ENCODE measurements at regions of chr1 and their contacts with region 1.

Region 1: DNA sequence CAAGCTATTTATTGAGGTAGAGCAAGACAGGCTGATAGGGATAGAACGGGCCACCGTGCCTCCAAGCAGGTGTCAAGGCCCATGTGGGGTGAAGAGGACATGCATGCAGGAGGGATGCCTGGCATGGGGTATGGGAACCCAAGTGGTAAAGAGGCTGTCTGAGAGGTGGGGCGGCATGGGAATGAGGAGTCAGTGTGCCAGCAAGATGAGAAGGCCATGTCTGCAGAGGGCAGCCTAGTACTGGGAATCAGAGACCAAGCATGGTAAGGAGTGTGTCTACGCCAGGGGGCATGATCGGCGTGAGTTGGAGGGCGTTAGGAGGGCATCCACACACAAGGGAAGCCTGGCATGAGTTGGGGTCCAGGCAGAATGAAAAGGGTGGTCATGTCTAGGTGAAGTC is 303.7 kb upstream of the PLD5 start:
- DNase-seq: no peak
- H3K4me3 Mint-ChIP-seq: no peak overlapping the region
- H3K27ac Mint-ChIP-seq: peak overlapping the region; percentile 5
- H3K4me1 Mint-ChIP-seq: peaks cover 46% of the 10 kb centered on the region
- H3K27me3 Mint-ChIP-seq: no peaks in the 10 kb centered on the region
- CTCF ChIP-seq: peak; percentile 19

Region 2: GRCh38 chr1:242629396-242629795 is 198.8 kb before region 1 on chr1:
- CTCF ChIA-PET with region 1: no interaction called
- POLR2A ChIA-PET with region 1: no interaction called
- intact Hi-C with region 1: loop called (anchors 5 kb)
- DNase-seq: peak; percentile 85
- H3K4me3 Mint-ChIP-seq: no peak overlapping the region
- H3K27ac Mint-ChIP-seq: peak overlapping the region; percentile 77
- H3K4me1 Mint-ChIP-seq: peaks cover 14% of the 10 kb centered on the region
- H3K27me3 Mint-ChIP-seq: no peaks in the 10 kb centered on the region
- CTCF ChIP-seq: no peak

Region 3: GRCh38 chr1:242811092-242811840 is 16.9 kb before region 1 on chr1:
- CTCF ChIA-PET with region 1: interaction called, 4 read pairs
- POLR2A ChIA-PET with region 1: interaction called, 10 read pairs
- intact Hi-C with region 1: loop called (anchors 1 kb)
- DNase-seq: peak; percentile 99
- H3K4me3 Mint-ChIP-seq: peak overlapping the region; percentile 49
- H3K27ac Mint-ChIP-seq: peak overlapping the region; percentile 87
- H3K4me1 Mint-ChIP-seq: peaks cover 31% of the 10 kb centered on the region
- H3K27me3 Mint-ChIP-seq: no peaks in the 10 kb centered on the region
- CTCF ChIP-seq: no peak